ENCODE measurements at regions of chr1 and their contacts with region 1.

Region 1: DNA sequence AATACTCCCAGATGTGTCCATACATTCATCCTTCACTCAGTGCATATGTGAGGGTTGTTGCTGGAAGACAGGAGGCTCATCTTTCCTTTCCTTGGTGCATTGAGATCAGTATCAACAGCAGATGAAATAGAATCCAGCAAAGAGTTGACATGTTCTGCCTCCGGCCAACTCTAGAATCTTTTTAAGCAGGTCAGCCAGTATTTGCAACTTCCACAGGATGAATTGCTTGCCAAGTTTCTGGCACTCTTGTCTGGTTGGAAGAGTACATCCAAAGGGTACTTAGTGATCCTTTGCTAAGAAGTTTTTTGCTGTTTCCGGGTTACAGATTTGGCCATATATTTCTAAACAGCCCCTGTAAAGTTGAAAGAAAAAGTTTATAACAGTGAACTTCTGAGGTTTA is 21.1 kb downstream of the SYNC start:
- DNase-seq: no peak
- ATAC-seq: peak; percentile 44
- H3K4me3 ChIP-seq: no peak overlapping the region
- H3K27ac ChIP-seq: no peak overlapping the region
- H3K4me1 ChIP-seq: peaks cover 0 to 2% of the 10 kb centered on the region in 2 donors
- H3K27me3 ChIP-seq: no peaks in the 10 kb centered on the region

Region 2: DNA sequence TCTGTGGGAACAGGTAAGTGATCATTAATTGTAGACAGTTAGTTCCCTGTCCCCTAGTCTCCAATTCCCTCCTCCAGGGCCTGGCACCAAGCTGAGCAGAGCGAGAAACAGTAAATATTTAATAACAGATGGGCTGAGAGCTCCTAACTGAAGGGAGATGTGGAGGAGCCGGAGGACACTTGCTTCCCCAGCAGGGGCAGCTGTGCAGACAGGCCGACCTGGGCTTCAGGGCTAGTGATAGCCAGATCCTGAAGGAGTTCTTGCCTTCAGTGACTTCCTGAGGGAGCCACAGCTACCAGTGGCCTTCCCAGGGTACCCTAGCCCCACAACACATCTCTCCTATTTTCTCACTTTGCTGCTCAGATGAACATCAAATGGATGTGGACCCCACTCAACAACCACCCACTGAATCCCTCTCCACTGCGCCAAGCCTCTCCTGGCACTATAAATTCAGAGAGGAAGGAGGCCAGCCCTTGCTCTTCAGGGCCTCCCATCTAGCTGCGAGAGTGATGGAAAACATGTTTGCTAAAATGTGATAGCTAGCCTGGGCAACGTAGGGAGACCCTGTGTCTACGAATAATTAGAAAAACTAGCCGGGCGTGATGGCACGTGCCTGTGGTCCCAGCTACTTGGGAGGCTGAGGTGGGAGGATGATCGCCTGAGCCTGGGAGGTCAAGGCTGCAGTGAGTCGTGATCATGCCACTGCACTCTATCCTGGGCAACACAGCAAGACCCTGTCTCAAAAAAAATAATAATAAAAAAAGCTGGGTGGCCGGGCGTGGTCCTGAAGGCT is 47.9 kb after region 1 on chr1:
- intact Hi-C with region 1: loop called in 1 of 2 experiments (anchors 2 kb)
- DNase-seq: no peak
- ATAC-seq: no peak
- H3K4me3 ChIP-seq: no peak overlapping the region
- H3K27ac ChIP-seq: no peak overlapping the region
- H3K4me1 ChIP-seq: no peaks in the 10 kb centered on the region
- H3K27me3 ChIP-seq: no peaks in the 10 kb centered on the region

Measured in aorta (tissue), 5 donors.